HCT116 (cell line): ENCODE measurements at regions of chr20 and their contacts with region 1.

Region 1: GRCh38 chr20:22700367-22700766 is 116.0 kb upstream of the FOXA2 start:
- DNase-seq: no peak
- ATAC-seq: no peak
- H3K4me3 ChIP-seq: no peak overlapping the region
- H3K27ac ChIP-seq: no peak overlapping the region
- H3K4me1 ChIP-seq: no peaks in the 10 kb centered on the region
- H3K27me3 ChIP-seq: peaks cover 10% of the 10 kb centered on the region; the same call in 1 of the 2 replicates
- CTCF ChIP-seq: no peak
- POLR2A ChIP-seq: no peak
- RAD21 ChIP-seq: no peak

Region 2: DNA sequence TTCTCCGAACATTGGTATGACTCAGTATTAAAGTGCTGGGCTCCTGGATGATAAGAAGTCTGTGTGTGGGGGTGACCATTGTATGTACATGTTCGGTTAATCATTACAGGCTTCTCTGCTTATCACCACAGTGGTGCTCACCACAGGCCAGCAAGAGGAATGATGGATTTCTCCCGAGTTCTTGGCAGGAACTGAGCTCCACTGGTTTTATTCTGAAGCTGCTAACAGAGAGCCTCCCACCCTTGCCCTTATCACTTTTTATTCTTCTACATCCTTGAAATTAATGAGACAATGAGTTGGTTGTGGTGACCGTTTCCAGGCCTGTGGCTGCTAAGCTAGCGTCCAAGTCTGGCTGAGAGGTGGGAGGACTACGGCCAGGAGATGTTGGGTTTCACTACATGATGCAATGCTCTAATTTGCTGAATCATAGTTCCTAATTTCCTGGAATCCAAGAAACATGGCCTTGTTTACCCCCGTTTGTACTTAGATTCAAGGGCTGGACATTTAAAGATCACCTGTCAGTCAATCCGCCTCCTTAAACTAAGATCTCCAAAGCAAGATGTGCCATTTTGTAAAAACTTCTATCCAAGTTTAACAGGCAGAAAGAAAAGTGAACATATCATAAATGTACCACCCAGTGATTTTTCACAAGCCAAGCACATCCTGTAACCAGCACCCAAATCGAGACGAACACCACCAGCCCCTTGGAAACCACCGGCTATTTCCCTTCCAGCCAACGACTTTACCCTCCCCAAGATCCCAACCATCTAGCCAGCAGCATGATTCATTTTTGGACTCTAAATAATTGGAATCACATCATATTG is 288.5 kb before region 1 on chr20:
- CTCF ChIA-PET with region 1: no interaction called
- POLR2A ChIA-PET with region 1: no interaction called
- RAD21 ChIA-PET with region 1: no interaction called
- intact Hi-C with region 1: no loop called
- DNase-seq: no peak
- ATAC-seq: no peak
- H3K4me3 ChIP-seq: no peak overlapping the region
- H3K27ac ChIP-seq: no peak overlapping the region
- H3K4me1 ChIP-seq: no peaks in the 10 kb centered on the region
- H3K27me3 ChIP-seq: no peaks in the 10 kb centered on the region
- CTCF ChIP-seq: no peak
- POLR2A ChIP-seq: no peak
- RAD21 ChIP-seq: no peak

Region 3: DNA sequence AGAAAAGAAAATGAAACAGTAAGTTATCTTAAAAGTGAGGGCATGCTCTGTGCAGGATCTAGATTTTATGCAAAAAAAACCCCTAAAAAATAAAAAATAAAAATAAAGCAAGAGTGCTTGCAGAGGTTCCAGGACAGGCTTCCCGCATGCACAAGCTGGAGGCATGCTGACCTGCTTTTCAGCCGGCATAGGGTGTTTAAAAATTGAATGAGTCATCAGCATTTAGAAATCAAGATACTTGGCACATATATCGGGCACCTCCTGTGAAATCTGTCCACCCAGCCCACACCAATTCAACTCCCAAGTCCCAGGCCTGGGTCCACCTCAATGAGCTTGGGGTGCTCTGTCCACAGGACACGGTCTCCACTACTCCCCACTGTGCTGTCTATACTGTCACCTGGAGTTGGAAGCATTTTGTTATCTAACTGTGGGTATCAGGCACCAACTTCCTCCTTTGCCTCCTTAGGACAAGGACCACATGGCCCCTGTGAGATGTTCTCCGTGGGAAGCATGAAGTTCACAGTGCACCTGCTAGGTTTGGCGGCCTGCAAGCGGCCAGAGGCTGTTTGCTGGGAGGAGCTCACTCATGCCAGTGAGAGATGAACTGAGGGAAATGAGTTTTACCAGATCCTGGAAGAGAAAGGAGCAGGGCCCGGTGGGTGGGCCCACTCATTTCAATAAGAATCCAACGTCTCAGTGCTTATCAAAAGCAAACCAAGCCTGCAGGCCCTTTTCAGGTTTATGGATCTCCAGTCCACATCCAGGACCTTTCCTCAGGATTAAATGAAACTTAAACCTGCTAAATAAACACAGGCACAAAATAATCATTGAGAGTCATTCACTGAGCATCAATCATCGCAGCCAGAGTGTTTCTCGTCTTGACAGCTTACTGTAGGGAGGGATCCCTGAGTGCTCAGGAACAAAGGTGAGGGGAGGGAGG is 237.1 kb before region 1 on chr20:
- CTCF ChIA-PET with region 1: no interaction called
- POLR2A ChIA-PET with region 1: no interaction called
- RAD21 ChIA-PET with region 1: no interaction called
- intact Hi-C with region 1: no loop called
- DNase-seq: no peak
- ATAC-seq: no peak
- H3K4me3 ChIP-seq: no peak overlapping the region
- H3K27ac ChIP-seq: no peak overlapping the region
- H3K4me1 ChIP-seq: no peaks in the 10 kb centered on the region
- H3K27me3 ChIP-seq: peaks cover 5% of the 10 kb centered on the region; the same call in 1 of the 2 replicates
- CTCF ChIP-seq: no peak
- POLR2A ChIP-seq: no peak
- RAD21 ChIP-seq: no peak

Region 4: DNA sequence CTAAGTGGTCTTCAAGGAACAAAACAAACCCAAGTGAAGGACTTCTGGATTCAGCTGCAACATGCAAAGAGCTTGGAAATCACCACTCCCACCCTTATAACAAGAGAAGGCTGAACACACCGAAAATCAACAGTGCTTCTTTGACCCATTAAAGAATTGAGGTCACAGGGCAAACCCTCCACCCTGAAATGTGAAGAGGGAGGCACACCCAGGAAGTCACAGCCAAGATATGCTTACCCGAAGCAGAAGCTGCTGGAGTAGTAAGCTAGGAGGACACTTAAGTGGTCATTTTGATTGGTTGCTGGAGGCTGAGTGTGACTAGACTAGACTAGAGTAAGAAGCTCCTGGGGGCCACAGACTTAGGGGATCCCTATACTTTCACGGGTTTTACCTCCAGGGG is 146.5 kb after region 1 on chr20:
- CTCF ChIA-PET with region 1: no interaction called
- POLR2A ChIA-PET with region 1: no interaction called
- RAD21 ChIA-PET with region 1: no interaction called
- intact Hi-C with region 1: loop called (anchors 10 kb)
- DNase-seq: no peak
- ATAC-seq: no peak
- H3K4me3 ChIP-seq: no peak overlapping the region
- H3K27ac ChIP-seq: no peak overlapping the region
- H3K4me1 ChIP-seq: no peaks in the 10 kb centered on the region
- H3K27me3 ChIP-seq: peaks cover 27% of the 10 kb centered on the region
- CTCF ChIP-seq: no peak
- POLR2A ChIP-seq: no peak
- RAD21 ChIP-seq: no peak